HepG2 (cell line): ENCODE measurements at regions of chr10 and their contacts with region 1.

Region 1: DNA sequence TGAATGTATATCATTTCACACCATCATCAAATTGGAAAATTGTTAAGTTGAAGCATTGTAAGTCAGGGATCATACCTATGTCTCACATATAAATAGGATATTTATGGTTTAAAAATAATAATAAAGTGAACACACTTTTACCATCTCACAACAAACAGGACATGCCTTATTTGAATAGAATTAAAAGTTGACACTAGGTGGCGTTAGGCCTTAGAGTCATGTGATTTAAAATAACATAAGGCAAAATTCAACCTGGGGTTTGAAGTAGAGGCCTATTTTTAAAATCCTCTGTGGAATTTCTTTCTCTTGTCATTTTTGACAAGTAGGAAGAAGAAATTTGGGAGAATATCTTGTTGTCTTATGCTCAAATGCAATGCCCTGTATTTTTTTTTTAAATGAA is 184.7 kb upstream of the PCDH15 start:
- DNase-seq: peak; percentile 37
- ATAC-seq: peak; percentile 56; the same call in 1 of the 3 replicates
- H3K4me3 ChIP-seq: no peak overlapping the region
- H3K27ac ChIP-seq: no peak overlapping the region
- H3K4me1 ChIP-seq: peaks cover 7% of the 10 kb centered on the region; the same call in 1 of the 2 replicates
- H3K27me3 ChIP-seq: no peaks in the 10 kb centered on the region
- CTCF ChIP-seq: peak; percentile 47
- EP300 ChIP-seq: no peak
- POLR2A ChIP-seq: no peak
- RAD21 ChIP-seq: no peak

Region 2: GRCh38 chr10:54869022-54869421 is 116.7 kb before region 1 on chr10:
- CTCF ChIA-PET with region 1: no interaction called
- POLR2A ChIA-PET with region 1: no interaction called
- in situ Hi-C with region 1: no loop called
- intact Hi-C with region 1: no loop called
- DNase-seq: no peak
- ATAC-seq: no peak
- H3K4me3 ChIP-seq: no peak overlapping the region
- H3K27ac ChIP-seq: no peak overlapping the region
- H3K4me1 ChIP-seq: no peaks in the 10 kb centered on the region
- H3K27me3 ChIP-seq: no peaks in the 10 kb centered on the region
- CTCF ChIP-seq: no peak
- EP300 ChIP-seq: no peak
- POLR2A ChIP-seq: no peak
- RAD21 ChIP-seq: no peak

Region 3: GRCh38 chr10:54908019-54908418 is 77.7 kb before region 1 on chr10:
- CTCF ChIA-PET with region 1: no interaction called
- POLR2A ChIA-PET with region 1: no interaction called
- in situ Hi-C with region 1: no loop called
- intact Hi-C with region 1: no loop called
- DNase-seq: no peak
- ATAC-seq: no peak
- H3K4me3 ChIP-seq: no peak overlapping the region
- H3K27ac ChIP-seq: no peak overlapping the region
- H3K4me1 ChIP-seq: no peaks in the 10 kb centered on the region
- H3K27me3 ChIP-seq: no peaks in the 10 kb centered on the region
- CTCF ChIP-seq: no peak
- EP300 ChIP-seq: no peak
- POLR2A ChIP-seq: no peak
- RAD21 ChIP-seq: no peak

Region 4: DNA sequence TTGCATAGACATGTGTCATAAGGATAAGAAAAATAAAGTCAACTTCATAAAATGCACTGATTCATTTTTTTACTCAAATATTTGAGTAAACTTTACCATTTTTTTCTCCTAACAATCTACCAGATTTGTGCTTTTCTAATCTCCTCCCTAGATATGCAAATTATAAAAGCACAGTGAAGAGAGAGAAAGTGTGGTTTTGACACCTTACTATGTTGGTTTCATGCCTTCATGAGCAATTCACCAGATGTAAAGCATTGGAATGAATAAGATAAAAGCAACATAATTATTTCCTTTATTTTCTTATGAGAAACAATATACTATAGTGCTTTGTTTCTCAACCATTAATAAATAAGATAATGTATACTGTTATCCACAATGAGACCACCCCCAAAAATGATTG is 247.8 kb after region 1 on chr10:
- CTCF ChIA-PET with region 1: no interaction called
- POLR2A ChIA-PET with region 1: no interaction called
- in situ Hi-C with region 1: loop called (anchors 25 kb)
- intact Hi-C with region 1: no loop called
- DNase-seq: no peak
- ATAC-seq: no peak
- H3K4me3 ChIP-seq: no peak overlapping the region
- H3K27ac ChIP-seq: no peak overlapping the region
- H3K4me1 ChIP-seq: no peaks in the 10 kb centered on the region
- H3K27me3 ChIP-seq: no peaks in the 10 kb centered on the region
- CTCF ChIP-seq: no peak
- EP300 ChIP-seq: no peak
- POLR2A ChIP-seq: no peak
- RAD21 ChIP-seq: no peak

Region 5: GRCh38 chr10:55263327-55263726 is 277.6 kb after region 1 on chr10:
- CTCF ChIA-PET with region 1: interaction called, 20 read pairs
- POLR2A ChIA-PET with region 1: no interaction called
- in situ Hi-C with region 1: no loop called
- intact Hi-C with region 1: loop called (anchors 1 kb)
- DNase-seq: no peak
- ATAC-seq: peak; percentile 79
- H3K4me3 ChIP-seq: no peak overlapping the region
- H3K27ac ChIP-seq: no peak overlapping the region
- H3K4me1 ChIP-seq: no peaks in the 10 kb centered on the region
- H3K27me3 ChIP-seq: no peaks in the 10 kb centered on the region
- CTCF ChIP-seq: no peak
- EP300 ChIP-seq: no peak
- POLR2A ChIP-seq: no peak
- RAD21 ChIP-seq: no peak